Activated CD8-positive, alpha-beta T cell treated with anti-CD3 and anti-CD28 coated beads for 36 hours (primary cell): ENCODE measurements at regions of chr16 and their contacts with region 1.

Region 1: GRCh38 chr16:20849587-20850390 is 43.5 kb downstream of the REXO5 start:
- DNase-seq: peak; percentile 75
- ATAC-seq: peak; percentile 47
- H3K4me3 Mint-ChIP-seq: no peak overlapping the region
- H3K27ac Mint-ChIP-seq: no peak overlapping the region
- H3K4me1 Mint-ChIP-seq: peaks cover 18% of the 10 kb centered on the region
- H3K27me3 Mint-ChIP-seq: no peaks in the 10 kb centered on the region
- CTCF ChIP-seq: peak; percentile 98

Region 2: DNA sequence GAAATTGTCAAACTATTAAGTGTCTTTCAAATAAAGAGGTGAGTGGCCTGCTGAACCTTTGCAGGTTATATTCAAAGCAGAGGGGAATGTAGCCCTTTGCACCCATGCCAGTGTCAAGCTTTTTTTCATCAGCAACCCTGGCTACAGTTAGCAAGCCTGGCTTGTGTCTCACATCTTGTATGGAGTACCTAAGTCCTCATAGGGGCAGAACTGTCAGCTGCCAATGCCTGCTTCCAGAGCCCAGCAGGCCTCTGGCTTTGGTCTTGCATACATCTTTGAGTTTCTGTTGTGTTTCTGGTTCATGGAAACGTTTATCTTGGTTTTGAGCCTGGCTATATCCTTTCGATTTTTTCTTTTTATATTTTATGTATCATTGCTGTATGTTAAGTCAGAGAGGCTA is 16.7 kb before region 1 on chr16:
- CTCF ChIA-PET with region 1: no interaction called
- POLR2A ChIA-PET with region 1: no interaction called
- intact Hi-C with region 1: no loop called
- DNase-seq: no peak
- ATAC-seq: no peak
- H3K4me3 Mint-ChIP-seq: no peak overlapping the region
- H3K27ac Mint-ChIP-seq: no peak overlapping the region
- H3K4me1 Mint-ChIP-seq: no peaks in the 10 kb centered on the region
- H3K27me3 Mint-ChIP-seq: no peaks in the 10 kb centered on the region
- CTCF ChIP-seq: no peak

Region 3: DNA sequence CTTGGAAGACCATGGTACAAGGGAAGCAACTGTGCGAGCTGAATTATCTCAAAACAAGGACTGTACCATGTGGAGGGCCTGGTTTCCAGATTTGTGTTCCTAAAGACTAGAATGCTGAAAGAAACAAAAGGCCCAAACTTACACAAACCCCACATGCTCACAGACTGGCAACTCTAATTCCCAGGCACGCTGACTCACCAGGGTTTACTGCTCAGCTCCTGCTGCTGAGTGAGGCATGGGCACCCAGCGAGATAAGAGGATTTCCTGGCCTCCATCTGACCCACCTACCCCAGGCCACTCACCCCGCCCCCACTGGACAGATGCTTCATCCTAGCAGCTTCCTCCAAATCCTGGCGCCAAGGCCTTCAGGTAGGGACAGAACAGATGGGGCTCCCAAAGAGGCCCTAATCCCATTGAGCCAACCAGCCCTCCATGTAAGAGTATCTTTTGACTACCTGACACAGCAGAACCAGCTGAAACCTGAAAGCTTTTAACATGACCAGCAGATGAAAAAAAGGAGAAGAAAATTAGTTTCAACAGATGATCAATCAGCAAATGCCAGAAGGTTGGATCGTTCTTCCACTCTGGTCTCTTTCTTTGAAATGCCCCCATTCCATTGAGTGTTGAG is 16.5 kb after region 1 on chr16:
- CTCF ChIA-PET with region 1: interaction called, 30 read pairs
- POLR2A ChIA-PET with region 1: no interaction called
- intact Hi-C with region 1: no loop called
- DNase-seq: peak; percentile 18
- ATAC-seq: peak; percentile 58
- H3K4me3 Mint-ChIP-seq: no peak overlapping the region
- H3K27ac Mint-ChIP-seq: peak overlapping the region; percentile 73
- H3K4me1 Mint-ChIP-seq: peaks cover 21% of the 10 kb centered on the region
- H3K27me3 Mint-ChIP-seq: no peaks in the 10 kb centered on the region
- CTCF ChIP-seq: no peak

Region 4: DNA sequence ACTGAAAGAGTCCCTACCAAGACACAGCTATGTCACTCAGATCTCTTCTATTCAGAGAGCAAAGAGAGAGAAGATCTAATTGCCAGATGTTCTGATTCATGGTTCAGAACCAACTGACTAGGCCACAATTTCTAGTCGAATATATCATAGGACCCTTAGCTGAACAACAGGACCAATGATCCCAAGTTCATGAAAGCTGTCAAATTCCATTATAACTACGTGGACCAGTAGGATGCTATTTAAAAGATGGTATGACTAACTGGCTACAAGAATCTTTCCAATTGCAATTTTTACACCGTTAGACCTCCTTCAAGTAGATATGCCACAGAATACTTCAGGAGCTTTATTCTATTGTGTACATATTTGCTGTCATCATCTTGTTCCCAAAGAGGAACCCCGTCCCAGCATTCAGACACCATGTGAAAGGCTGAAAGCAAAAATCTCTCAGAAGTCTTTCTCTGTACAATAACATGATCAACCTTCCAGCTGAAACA is 24.3 kb after region 1 on chr16:
- CTCF ChIA-PET with region 1: interaction called, 30 read pairs
- POLR2A ChIA-PET with region 1: no interaction called
- intact Hi-C with region 1: no loop called
- DNase-seq: no peak
- ATAC-seq: peak; percentile 7
- H3K4me3 Mint-ChIP-seq: peak overlapping the region; percentile 38
- H3K27ac Mint-ChIP-seq: peak overlapping the region; percentile 53
- H3K4me1 Mint-ChIP-seq: peaks cover 58% of the 10 kb centered on the region
- H3K27me3 Mint-ChIP-seq: no peaks in the 10 kb centered on the region
- CTCF ChIP-seq: no peak

Region 5: GRCh38 chr16:20900299-20901067 is 50.7 kb after region 1 on chr16 and contains the starts of genes DCUN1D3 and LYRM1:
- CTCF ChIA-PET with region 1: interaction called, 25 read pairs
- POLR2A ChIA-PET with region 1: interaction called, 4 read pairs
- intact Hi-C with region 1: no loop called
- DNase-seq: peak; percentile 95
- ATAC-seq: peak; percentile 82
- H3K4me3 Mint-ChIP-seq: peak within 1 kb of the TSS; percentile 93
- H3K27ac Mint-ChIP-seq: peak within 1 kb of the TSS; percentile 98
- H3K4me1 Mint-ChIP-seq: peaks cover 70% of the 10 kb centered on the region
- H3K27me3 Mint-ChIP-seq: no peaks in the 10 kb centered on the region
- CTCF ChIP-seq: no peak
- total RNA-seq, gene DCUN1D3: 5.9 to 6.9 TPM
- total RNA-seq, gene LYRM1: 31.3 to 32.5 TPM

Region 6: DNA sequence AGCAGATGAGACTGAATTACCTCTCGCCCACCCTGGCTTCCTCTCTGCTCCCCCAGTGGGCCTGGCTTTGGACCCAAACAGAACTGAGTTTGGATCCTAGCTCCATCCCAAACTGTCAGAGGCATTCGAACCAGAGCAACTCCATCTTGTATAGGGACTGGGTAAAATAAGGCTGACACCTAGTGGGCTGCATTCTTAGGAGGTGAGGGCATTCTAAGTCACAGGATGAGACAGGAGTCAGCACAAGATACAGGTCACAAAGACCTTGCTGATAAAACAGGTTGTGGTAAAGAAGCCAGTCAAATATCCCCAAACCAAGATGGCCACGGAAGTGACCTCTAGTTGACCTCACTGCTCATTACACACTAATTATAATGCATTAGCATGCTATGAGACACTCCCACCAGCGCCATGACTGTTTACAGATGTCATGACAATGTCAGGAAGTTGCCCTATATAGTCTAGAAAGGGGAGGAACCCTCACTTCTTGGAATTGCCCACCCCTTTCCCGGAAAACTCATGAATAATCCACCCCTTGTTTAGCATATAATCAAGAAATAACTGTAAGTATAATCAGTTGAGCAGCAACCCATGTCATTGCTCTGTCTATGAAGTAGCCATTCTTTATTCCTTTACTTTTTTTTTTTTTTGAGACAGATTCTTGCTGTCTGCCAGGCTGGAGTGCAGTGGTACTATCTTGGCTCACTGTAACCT is 95.2 kb after region 1 on chr16:
- CTCF ChIA-PET with region 1: interaction called, 11 read pairs
- POLR2A ChIA-PET with region 1: interaction called, 3 read pairs
- intact Hi-C with region 1: loop called (anchors 10 kb)
- DNase-seq: peak; percentile 90
- ATAC-seq: peak; percentile 87
- H3K4me3 Mint-ChIP-seq: no peak overlapping the region
- H3K27ac Mint-ChIP-seq: no peak overlapping the region
- H3K4me1 Mint-ChIP-seq: peaks cover 33% of the 10 kb centered on the region
- H3K27me3 Mint-ChIP-seq: no peaks in the 10 kb centered on the region
- CTCF ChIP-seq: no peak

Region 7: DNA sequence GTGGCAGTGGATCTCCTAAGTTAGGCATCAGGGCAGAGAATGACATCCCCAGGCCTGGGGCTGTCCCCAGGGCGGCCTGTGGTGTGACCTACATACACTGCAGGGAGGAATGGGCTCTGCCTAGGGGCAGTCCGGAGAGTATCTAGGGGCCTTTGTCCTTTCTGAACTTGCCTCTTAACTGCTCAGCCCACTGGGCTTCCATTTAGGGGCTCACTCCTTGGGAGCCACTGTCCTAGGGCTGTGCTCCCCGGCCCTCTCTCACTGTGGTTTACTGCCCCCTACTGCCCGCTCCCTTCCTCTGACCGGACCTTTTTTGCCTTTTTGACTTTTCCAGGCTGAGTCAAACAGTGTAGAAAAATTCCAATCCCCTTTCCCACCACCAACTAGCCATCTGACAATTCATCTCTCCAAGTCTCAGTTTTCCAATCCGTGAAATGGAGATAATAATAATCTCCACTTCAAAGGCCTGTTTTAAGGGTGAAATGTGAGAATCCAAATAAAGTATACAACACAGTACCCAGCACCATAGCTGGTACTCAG is 234.0 kb after region 1 on chr16:
- CTCF ChIA-PET with region 1: interaction called, 30 read pairs
- POLR2A ChIA-PET with region 1: no interaction called
- intact Hi-C with region 1: loop called (anchors 10 kb)
- DNase-seq: peak; percentile 65
- ATAC-seq: peak; percentile 76
- H3K4me3 Mint-ChIP-seq: no peak overlapping the region
- H3K27ac Mint-ChIP-seq: no peak overlapping the region
- H3K4me1 Mint-ChIP-seq: no peaks in the 10 kb centered on the region
- H3K27me3 Mint-ChIP-seq: no peaks in the 10 kb centered on the region
- CTCF ChIP-seq: peak; percentile 76